Posterior vena cava (tissue), 2 donors: ENCODE measurements at regions of chr19 and their contacts with region 1.

Region 1: DNA sequence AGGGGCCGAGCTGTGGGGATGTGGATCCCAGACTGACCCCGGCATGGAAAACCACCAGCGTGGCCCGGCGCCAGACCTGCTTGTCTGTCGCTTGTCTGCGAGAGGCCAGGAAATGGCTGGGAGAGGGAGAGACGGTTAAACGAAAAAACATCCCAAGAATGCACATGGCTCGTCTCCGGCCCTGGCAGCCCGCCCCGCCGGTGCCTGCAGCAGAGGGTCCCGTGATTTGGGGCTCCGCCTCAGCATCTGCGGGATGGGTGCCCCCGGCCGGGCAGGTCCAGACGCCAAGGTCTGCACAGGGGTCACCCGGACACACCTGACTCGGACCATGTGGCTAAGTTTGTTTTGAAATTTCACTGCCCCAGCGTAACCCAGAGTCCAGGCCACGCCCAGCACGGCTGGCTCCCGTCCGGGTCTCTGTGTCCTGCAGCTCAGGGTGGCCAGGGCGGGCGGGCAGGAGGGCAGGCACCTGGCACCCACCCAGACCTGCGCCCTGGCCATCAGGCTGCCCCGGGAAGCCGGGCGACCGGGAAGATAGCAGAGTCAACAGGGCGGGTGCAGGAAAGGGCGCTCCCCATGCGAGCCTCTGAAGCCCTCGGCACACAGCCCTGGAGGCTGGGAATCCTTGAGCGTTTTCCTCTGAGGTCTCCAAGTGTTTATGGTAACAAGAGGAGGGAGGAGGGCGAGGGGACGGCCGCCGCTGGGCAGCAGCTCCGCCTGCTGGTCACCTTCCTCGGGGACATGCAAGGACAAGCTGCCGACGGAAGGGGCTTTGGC is 103.2 kb downstream of the GADD45B start:
- DNase-seq: peak; percentile 96

Region 2: GRCh38 chr19:2610637-2611482 is 31.8 kb after region 1 on chr19:
- intact Hi-C with region 1: loop called (anchors 2 to 5 kb)
- DNase-seq: peak; percentile 97